ENCODE measurements at regions of chr2 and their contacts with region 1.

Region 1: DNA sequence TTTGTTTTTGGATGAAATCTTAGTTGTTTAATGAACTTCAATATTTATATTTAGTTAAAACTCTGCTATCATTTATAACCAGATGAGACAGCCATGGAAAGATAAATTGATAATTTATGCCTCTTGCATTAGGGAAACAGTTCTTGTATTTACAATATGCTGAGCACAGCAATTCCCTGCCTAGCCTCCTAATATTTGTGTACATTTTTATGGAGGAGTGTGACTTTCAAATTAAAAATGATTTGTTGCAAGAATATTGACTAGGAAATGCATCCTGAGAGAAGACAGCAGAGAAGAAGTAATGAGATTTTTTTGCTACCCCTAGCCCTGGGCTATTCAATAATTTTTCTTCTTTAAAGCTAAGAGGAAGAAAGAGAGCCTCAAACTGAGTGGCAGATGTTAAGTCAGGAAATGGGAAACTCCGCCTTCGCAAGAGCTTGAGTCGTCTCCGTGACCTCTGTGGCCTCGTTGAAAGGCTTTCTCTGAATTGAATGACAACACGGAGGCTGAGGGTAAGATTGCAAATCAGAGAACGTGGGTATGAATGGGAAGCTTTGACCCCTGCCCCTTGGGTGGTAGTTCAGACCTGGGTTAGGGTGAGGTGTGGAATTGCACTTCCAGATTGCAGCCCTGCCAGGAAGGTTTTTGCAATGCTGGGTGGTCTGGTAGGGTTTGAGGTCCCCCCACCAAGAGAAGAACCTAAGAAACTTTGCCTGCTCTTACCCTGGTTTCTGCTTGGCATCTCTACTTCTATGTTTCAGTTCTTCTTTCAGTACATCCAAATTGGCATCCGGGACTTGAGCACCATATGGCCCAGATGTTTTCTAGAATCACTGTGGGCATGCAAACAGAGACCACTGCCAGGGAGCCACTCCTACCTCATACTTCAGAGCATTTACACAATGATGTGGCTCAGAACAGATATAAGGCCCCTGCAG is 210.3 kb upstream of the RBMS1 start:
- DNase-seq: peak; percentile 61 to 85 (median 70)
- H3K4me3 ChIP-seq: peak overlapping the region in 1 of 3 experiments; percentile 41
- H3K4me3 Mint-ChIP-seq: peak overlapping the region; percentile 38 to 79
- H3K27ac ChIP-seq: peak overlapping the region; percentile 63 to 65
- H3K27ac Mint-ChIP-seq: peak overlapping the region; percentile 76 to 95 (median 90)
- H3K4me1 ChIP-seq: peaks cover 22 to 27% of the 10 kb centered on the region in 2 donors
- H3K4me1 Mint-ChIP-seq: peaks cover 33% of the 10 kb centered on the region
- H3K27me3 ChIP-seq: no peaks in the 10 kb centered on the region
- H3K27me3 Mint-ChIP-seq: peaks cover 0 to 2% (median 0%) of the 10 kb centered on the region in 3 donors
- CTCF ChIP-seq: no peak

Region 2: DNA sequence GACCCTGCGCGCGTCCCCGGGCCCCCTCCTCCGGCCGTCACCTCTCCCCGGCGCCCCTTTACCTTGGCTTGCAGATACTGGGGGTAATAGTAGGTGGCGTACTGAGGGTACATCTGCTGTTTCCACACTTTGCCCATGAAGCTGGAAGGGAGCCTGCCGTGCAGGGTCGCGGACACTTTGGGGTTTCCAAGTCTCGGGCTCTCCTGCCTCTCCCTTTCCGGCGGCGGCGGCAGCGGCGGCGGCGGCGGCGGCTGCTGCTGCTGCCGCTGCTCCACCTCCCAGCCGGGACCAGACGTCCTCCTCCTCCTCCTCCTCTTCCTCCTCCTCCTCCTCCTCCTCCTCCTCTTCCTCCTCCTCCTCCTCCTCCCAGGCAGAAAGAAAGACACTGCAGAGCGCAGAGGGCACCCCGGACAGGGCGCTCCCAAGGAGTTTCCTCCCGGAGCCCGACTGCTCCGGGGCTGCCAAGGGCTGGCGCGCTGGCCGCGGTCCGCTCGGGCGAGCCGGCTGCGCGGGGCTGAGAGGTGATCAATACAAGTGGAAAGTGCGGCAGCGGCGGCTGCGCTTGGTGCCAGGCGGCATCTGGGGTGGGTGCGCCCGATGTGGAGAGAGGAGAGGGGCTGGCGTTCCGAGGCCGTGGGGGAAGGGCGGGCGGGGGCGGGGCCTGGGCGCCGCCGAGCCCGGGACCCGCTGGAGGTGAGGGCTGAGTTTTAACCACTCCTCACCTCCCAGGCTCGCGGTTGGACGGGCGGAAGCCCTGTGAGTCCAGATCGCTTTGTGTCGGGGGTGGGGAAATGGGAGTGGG is 210.5 kb before region 1 on chr2 and contains the start of gene RBMS1:
- intact Hi-C with region 1: loop called in 1 of 2 experiments (anchors 5 kb)
- DNase-seq: peak in 2 of 3 donors; percentile 15 to 31
- H3K4me3 ChIP-seq: peak within 1 kb of the TSS; percentile 59 to 91 (median 66)
- H3K4me3 Mint-ChIP-seq: peak within 1 kb of the TSS; percentile 91 to 95
- H3K27ac ChIP-seq: peak within 1 kb of the TSS in 1 of 2 donors; percentile 66
- H3K27ac Mint-ChIP-seq: peak within 1 kb of the TSS in 5 of 7 donors; percentile 50 to 86 (median 65)
- H3K4me1 ChIP-seq: peaks cover 21 to 35% of the 10 kb centered on the region in 2 donors
- H3K4me1 Mint-ChIP-seq: peaks cover 38% of the 10 kb centered on the region
- H3K27me3 ChIP-seq: peaks cover 15 to 36% of the 10 kb centered on the region in 2 donors
- H3K27me3 Mint-ChIP-seq: peaks cover 20 to 36% (median 29%) of the 10 kb centered on the region in 3 donors
- CTCF ChIP-seq: no peak
- polyA plus RNA-seq, gene RBMS1: 88.2 to 91.2 (median 89.4) TPM

Region 3: DNA sequence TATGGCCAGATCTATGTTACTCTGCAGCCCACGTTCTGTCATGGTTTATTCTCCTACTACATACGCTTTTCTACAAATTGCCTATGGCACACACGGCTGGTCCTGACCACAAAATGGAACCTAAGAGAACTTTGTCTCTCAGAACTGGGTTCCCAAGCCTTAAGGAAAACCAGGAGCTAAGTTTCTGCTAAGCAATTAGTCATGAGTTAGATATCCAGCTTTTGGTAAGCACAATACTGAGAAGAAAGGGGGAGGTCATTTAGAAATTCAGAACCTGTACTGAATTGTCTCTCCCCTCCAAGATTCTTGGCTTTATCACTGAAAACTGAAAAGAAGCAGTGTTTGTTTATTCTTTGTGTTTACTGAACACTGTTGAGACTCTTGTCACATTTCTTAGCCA is 172.8 kb after region 1 on chr2:
- intact Hi-C with region 1: no loop called
- DNase-seq: no peak
- H3K4me3 ChIP-seq: no peak overlapping the region
- H3K4me3 Mint-ChIP-seq: no peak overlapping the region
- H3K27ac ChIP-seq: no peak overlapping the region
- H3K27ac Mint-ChIP-seq: no peak overlapping the region
- H3K4me1 ChIP-seq: no peaks in the 10 kb centered on the region
- H3K4me1 Mint-ChIP-seq: no peaks in the 10 kb centered on the region
- H3K27me3 ChIP-seq: no peaks in the 10 kb centered on the region
- H3K27me3 Mint-ChIP-seq: peaks cover 2% of the 10 kb centered on the region in 3 donors
- CTCF ChIP-seq: no peak